ENCODE measurements at regions of chr6 and their contacts with region 1.

Region 1: GRCh38 chr6:157830354-157831017 is 7.4 kb downstream of the SNX9 start:
- DNase-seq: no peak
- H3K4me3 ChIP-seq: no peak overlapping the region
- H3K4me3 Mint-ChIP-seq: no peak overlapping the region
- H3K27ac ChIP-seq: no peak overlapping the region
- H3K27ac Mint-ChIP-seq: no peak overlapping the region
- H3K4me1 ChIP-seq: peaks cover 5 to 17% of the 10 kb centered on the region in 2 donors
- H3K4me1 Mint-ChIP-seq: peaks cover 20% of the 10 kb centered on the region
- H3K27me3 ChIP-seq: peaks cover 0 to 3% of the 10 kb centered on the region in 2 donors
- H3K27me3 Mint-ChIP-seq: peaks cover 0 to 8% (median 3%) of the 10 kb centered on the region in 3 donors
- CTCF ChIP-seq: no peak

Region 2: DNA sequence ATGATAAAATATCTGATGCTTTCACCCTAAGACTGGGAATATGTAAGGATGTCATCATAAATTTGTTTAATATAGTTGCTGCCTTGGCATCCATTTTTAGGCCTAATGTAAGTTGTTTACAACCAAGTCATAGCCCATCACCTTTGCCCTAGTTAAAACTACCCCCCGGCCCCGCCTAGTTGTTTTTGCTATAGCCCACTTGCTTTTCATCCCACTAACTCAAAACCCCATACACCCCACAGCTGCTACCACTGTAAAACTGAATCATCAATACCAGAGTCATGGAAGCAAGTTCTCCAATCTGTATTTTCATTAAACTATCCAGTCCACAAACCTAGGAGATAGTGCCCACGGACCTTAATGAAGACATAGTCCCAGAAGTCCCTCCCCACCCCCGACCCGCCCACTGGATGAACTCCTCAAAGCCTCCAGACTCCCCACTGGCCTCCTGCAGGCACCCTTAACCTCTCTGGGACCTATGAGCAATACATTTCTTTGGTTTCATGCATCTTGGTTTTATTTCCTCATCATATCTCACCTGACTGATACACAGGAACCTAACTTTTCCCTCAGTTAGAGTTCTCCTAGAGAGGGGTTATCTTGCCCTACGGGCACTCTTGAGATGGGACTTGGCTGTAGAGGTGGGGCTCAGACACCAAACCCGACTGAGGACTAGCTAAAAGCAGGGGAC is 462.0 kb before region 1 on chr6:
- intact Hi-C with region 1: no loop called
- DNase-seq: no peak
- H3K4me3 ChIP-seq: no peak overlapping the region
- H3K4me3 Mint-ChIP-seq: no peak overlapping the region
- H3K27ac ChIP-seq: no peak overlapping the region
- H3K27ac Mint-ChIP-seq: no peak overlapping the region
- H3K4me1 ChIP-seq: peaks cover 8 to 11% of the 10 kb centered on the region in 2 donors
- H3K4me1 Mint-ChIP-seq: peaks cover 15% of the 10 kb centered on the region
- H3K27me3 ChIP-seq: no peaks in the 10 kb centered on the region
- H3K27me3 Mint-ChIP-seq: peaks cover 7 to 11% (median 9%) of the 10 kb centered on the region in 3 donors
- CTCF ChIP-seq: no peak

Region 3: DNA sequence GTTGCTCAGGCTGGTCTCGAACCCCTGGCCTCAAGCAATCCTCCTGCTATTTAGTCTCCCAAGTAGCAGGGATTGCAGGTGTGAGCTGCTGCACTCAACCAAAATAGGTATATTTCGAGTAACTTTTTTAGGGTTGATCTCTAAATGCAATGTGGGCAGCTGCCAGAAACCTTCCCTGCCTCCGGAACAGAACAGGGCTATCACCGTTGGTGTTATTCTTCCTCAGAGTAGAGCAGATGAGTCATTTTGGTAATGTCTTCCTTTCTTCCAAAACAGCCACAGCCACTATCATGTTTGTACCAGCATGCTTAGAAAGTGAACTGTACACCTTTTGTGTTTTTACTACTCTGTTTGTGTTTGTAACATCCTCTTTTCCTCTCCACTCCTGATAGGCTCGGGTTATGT is 36.7 kb after region 1 on chr6:
- intact Hi-C with region 1: loop called (anchors 5 kb)
- DNase-seq: no peak
- H3K4me3 ChIP-seq: no peak overlapping the region
- H3K4me3 Mint-ChIP-seq: no peak overlapping the region
- H3K27ac ChIP-seq: no peak overlapping the region
- H3K27ac Mint-ChIP-seq: no peak overlapping the region
- H3K4me1 ChIP-seq: no peaks in the 10 kb centered on the region
- H3K4me1 Mint-ChIP-seq: peaks cover 3% of the 10 kb centered on the region
- H3K27me3 ChIP-seq: no peaks in the 10 kb centered on the region
- H3K27me3 Mint-ChIP-seq: no peaks in the 10 kb centered on the region
- CTCF ChIP-seq: no peak

Region 4: DNA sequence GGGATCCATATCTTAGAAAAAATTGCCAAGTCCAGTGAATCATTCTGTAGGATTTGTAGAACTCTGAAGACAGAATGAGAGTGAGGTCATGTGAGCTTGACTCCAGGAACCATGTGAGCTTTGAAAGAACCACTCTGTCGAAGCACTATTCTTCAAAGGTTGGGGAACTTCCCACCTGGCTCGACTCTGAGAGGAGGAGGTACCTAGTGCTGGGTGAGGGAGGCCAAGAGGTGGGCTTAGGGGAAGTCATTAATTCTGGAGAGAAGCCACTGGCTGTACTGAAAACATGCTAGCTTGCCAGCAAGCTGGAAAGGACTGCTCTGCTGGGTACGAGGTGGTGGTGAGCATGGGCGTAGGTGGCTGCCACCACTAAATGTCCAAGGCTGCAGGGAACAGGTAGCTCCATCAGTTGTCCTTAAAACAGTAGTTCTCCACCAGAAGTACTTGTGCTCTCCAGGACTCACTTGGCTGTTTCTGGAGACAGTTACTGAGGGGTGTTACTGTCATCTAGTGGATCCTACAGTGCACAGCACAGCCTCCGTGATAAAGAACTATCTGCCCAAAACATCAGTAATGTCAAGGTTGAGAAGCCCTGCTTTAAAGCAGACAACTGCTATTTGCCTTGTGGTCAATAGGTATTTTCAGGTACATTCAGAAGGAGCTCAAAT is 116.5 kb after region 1 on chr6:
- intact Hi-C with region 1: no loop called
- DNase-seq: peak in 1 of 3 donors; percentile 22
- H3K4me3 ChIP-seq: no peak overlapping the region
- H3K4me3 Mint-ChIP-seq: peak overlapping the region in 1 of 2 donors; percentile 7
- H3K27ac ChIP-seq: no peak overlapping the region
- H3K27ac Mint-ChIP-seq: no peak overlapping the region
- H3K4me1 ChIP-seq: no peaks in the 10 kb centered on the region
- H3K4me1 Mint-ChIP-seq: no peaks in the 10 kb centered on the region
- H3K27me3 ChIP-seq: no peaks in the 10 kb centered on the region
- H3K27me3 Mint-ChIP-seq: peaks cover 0 to 3% (median 0%) of the 10 kb centered on the region in 3 donors
- CTCF ChIP-seq: peak; percentile 12

Region 5: GRCh38 chr6:158109744-158110143 is 279.3 kb after region 1 on chr6:
- intact Hi-C with region 1: no loop called
- DNase-seq: no peak
- H3K4me3 ChIP-seq: no peak overlapping the region
- H3K4me3 Mint-ChIP-seq: no peak overlapping the region
- H3K27ac ChIP-seq: no peak overlapping the region
- H3K27ac Mint-ChIP-seq: peak overlapping the region in 2 of 7 donors; percentile 15 to 61
- H3K4me1 ChIP-seq: peaks cover 0 to 6% of the 10 kb centered on the region in 2 donors
- H3K4me1 Mint-ChIP-seq: peaks cover 6% of the 10 kb centered on the region
- H3K27me3 ChIP-seq: no peaks in the 10 kb centered on the region
- H3K27me3 Mint-ChIP-seq: peaks cover 0 to 2% (median 0%) of the 10 kb centered on the region in 3 donors
- CTCF ChIP-seq: no peak